Activated naive CD4-positive, alpha-beta T cell treated with anti-CD3 and anti-CD28 coated beads for 36 hours (primary cell): ENCODE measurements at regions of chr1 and their contacts with region 1.

Region 1: GRCh38 chr1:224168859-224169380 is 14.1 kb upstream of the DEGS1 start:
- DNase-seq: peak; percentile 60
- H3K4me3 Mint-ChIP-seq: no peak overlapping the region
- H3K27ac Mint-ChIP-seq: peak overlapping the region; percentile 9
- H3K4me1 Mint-ChIP-seq: peaks cover 32% of the 10 kb centered on the region
- H3K27me3 Mint-ChIP-seq: no peaks in the 10 kb centered on the region

Region 2: DNA sequence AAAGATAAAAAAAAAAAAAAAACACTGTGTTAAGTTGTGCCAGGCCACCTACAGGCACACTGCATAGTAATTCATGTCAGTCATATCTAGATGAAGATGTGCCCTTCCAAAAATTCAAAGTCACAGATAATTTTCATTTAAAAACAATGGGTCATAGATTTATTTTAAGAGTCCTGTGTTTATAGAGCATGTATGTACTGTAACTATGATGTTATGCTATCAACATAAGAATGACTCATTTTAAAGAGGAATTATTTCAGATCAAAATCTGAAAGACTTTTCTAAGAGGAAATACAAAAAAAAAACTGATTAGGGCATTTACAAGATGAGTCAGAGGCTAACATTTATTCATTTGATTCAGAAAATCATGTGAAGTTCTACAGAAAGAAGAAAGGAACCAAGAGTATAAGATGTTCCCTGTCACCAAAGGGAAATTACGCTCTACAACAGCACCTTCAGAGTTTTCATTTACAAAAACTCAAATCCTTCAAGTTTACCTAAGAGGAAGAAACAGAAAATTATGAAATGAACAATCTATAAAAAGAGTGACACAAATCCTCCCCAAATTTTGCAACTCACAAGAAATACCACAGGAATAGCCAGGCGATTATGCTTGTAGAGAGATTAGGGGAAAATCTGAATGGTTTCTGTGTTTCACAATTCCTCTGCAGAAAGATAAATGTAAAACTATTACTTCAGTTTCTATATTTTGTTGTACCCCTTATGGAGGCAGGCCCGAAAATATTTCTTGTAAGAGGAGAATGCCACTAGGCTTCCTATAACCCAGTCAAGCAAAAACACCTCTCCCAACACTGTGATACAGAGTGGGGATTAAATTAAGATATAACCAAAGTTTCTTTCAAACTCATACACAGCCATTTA is 336.9 kb before region 1 on chr1:
- CTCF ChIA-PET with region 1: no interaction called
- intact Hi-C with region 1: loop called (anchors 1 kb)
- DNase-seq: peak; percentile 14
- H3K4me3 Mint-ChIP-seq: peak overlapping the region; percentile 28
- H3K27ac Mint-ChIP-seq: peak overlapping the region; percentile 93
- H3K4me1 Mint-ChIP-seq: peaks cover 28% of the 10 kb centered on the region
- H3K27me3 Mint-ChIP-seq: no peaks in the 10 kb centered on the region

Region 3: DNA sequence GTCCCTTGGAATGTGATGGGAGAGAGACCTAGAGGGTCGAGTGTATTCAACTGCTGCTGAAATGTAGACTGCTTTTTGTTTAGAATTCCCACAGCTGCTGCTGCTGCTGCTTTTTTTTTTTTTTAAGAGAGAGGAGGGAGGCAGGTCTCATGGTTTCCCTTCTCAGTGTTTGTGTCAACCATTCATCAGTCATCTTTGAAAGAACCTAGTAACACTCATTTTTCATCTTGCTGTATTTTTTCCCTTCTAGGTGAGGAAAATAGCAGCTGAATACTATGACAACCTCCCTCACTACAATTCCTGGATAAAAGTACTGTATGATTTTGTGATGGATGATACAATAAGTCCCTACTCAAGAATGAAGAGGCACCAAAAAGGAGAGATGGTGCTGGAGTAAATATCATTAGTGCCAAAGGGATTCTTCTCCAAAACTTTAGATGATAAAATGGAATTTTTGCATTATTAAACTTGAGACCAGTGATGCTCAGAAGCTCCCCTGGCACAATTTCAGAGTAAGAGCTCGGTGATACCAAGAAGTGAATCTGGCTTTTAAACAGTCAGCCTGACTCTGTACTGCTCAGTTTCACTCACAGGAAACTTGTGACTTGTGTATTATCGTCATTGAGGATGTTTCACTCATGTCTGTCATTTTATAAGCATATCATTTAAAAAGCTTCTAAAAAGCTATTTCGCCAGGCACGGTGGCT is 23.3 kb after region 1 on chr1:
- CTCF ChIA-PET with region 1: interaction called, 3 read pairs
- intact Hi-C with region 1: loop called (anchors 1 kb)
- DNase-seq: peak; percentile 17
- H3K4me3 Mint-ChIP-seq: no peak overlapping the region
- H3K27ac Mint-ChIP-seq: peak overlapping the region; percentile 80
- H3K4me1 Mint-ChIP-seq: peaks cover 21% of the 10 kb centered on the region
- H3K27me3 Mint-ChIP-seq: no peaks in the 10 kb centered on the region

Region 4: DNA sequence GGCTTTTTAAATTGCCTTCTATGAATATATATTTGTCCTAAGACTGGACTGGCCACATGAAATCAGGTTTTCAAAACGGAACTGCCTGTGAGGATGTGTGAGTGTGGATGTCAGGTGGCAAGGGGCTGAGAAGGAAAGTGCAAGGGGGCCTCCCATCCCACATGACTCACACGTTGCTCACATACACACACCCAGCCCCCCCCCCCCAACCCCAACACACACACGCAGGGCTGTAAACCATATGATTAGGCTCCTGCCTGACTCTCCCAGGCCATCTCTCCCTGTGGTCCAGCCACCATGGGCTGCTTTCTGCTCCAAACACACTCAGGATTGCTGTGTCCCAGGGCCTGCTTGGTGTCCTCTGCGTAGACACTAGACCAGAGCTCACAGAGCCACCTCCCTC is 36.5 kb after region 1 on chr1:
- CTCF ChIA-PET with region 1: interaction called, 3 read pairs
- intact Hi-C with region 1: loop called (anchors 1 kb)
- DNase-seq: peak; percentile 63
- H3K4me3 Mint-ChIP-seq: no peak overlapping the region
- H3K27ac Mint-ChIP-seq: no peak overlapping the region
- H3K4me1 Mint-ChIP-seq: peaks cover 11% of the 10 kb centered on the region
- H3K27me3 Mint-ChIP-seq: no peaks in the 10 kb centered on the region

Region 5: GRCh38 chr1:224329842-224330753 is 161.2 kb after region 1 on chr1 and contains the start of gene NVL:
- CTCF ChIA-PET with region 1: interaction called, 3 read pairs
- intact Hi-C with region 1: loop called (anchors 1 kb)
- DNase-seq: peak; percentile 89
- H3K4me3 Mint-ChIP-seq: peak within 1 kb of the TSS; percentile 98
- H3K27ac Mint-ChIP-seq: peak within 1 kb of the TSS; percentile 98
- H3K4me1 Mint-ChIP-seq: peaks cover 38% of the 10 kb centered on the region
- H3K27me3 Mint-ChIP-seq: no peaks in the 10 kb centered on the region
- total RNA-seq, gene NVL: 26.7 to 29.9 TPM